MCF 10A (cell line): ENCODE measurements at regions of chr2 and their contacts with region 1.

Region 1: GRCh38 chr2:20097879-20098714 is 46.7 kb upstream of the LAPTM4A start:
- DNase-seq: peak; percentile 85
- H3K4me3 Mint-ChIP-seq: no peak overlapping the region
- H3K27ac Mint-ChIP-seq: no peak overlapping the region
- H3K4me1 Mint-ChIP-seq: peaks cover 21% of the 10 kb centered on the region
- H3K27me3 Mint-ChIP-seq: no peaks in the 10 kb centered on the region
- CTCF ChIP-seq: peak; percentile 92

Region 2: DNA sequence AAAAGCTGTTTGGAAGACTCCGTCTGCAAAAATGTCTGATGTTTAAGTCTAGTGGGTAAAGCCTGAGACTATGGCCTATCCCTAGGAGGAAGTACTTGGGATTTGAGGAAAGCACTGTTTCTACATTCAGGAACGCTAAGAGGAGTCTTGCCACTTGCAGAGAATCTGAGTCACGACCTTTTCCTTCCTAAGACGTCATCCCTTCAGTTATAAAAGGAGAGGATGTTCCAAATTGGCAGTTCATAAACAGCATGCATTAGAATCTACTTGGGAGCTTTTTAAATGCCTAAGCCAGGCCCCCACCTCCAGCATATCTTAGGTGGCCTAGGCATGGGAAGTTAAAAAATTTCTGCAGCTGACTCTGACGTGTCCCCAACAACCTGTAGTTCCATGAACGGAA is 322.3 kb before region 1 on chr2:
- CTCF ChIA-PET with region 1: no interaction called
- POLR2A ChIA-PET with region 1: no interaction called
- intact Hi-C with region 1: no loop called
- DNase-seq: no peak
- H3K4me3 Mint-ChIP-seq: no peak overlapping the region
- H3K27ac Mint-ChIP-seq: no peak overlapping the region
- H3K4me1 Mint-ChIP-seq: peaks cover 9% of the 10 kb centered on the region
- H3K27me3 Mint-ChIP-seq: peaks cover 17% of the 10 kb centered on the region
- CTCF ChIP-seq: no peak

Region 3: DNA sequence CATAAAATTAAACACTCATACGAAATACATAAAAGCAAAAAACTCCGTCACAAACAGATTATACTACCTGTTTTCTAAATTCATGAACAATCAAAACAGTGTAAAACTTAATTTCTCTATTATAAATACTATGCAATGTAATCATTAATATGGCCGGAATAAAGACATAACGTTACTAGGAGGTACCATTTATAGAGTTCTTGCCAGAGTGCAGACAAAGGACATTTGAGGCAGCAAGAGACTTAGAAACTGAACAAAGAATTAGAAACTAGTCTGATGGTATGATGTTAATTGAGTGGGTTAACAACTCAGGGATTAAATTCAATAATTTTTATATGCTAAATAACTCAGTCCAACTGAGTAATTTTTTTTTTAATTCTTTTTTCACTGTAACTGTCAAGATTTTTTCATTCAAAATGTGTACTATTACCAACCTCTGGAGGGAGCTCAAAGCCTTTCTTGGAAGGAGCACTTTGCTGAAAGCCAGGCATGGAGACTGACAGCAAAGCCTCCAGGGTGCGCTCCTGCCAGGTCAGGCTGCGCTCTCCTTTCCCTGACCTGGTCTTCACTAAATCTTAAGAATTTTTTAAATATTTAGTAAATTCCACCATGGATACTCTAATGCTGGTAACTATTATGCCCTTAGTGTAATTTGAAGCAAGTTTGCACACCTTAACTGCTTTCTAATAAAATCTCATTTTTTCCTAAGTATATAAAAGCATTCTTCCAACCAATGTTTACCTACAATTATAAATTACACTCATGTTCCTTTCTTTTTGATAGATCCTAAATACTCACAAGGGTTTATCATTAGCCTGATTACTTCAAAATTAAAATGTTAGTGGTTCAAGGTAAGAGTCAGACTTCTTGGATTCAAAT is 142.3 kb before region 1 on chr2:
- CTCF ChIA-PET with region 1: interaction called, 44 read pairs
- POLR2A ChIA-PET with region 1: interaction called, 4 read pairs
- intact Hi-C with region 1: loop called (anchors 1 kb)
- DNase-seq: peak; percentile 72
- H3K4me3 Mint-ChIP-seq: no peak overlapping the region
- H3K27ac Mint-ChIP-seq: no peak overlapping the region
- H3K4me1 Mint-ChIP-seq: no peaks in the 10 kb centered on the region
- H3K27me3 Mint-ChIP-seq: no peaks in the 10 kb centered on the region
- CTCF ChIP-seq: peak; percentile 82

Region 4: DNA sequence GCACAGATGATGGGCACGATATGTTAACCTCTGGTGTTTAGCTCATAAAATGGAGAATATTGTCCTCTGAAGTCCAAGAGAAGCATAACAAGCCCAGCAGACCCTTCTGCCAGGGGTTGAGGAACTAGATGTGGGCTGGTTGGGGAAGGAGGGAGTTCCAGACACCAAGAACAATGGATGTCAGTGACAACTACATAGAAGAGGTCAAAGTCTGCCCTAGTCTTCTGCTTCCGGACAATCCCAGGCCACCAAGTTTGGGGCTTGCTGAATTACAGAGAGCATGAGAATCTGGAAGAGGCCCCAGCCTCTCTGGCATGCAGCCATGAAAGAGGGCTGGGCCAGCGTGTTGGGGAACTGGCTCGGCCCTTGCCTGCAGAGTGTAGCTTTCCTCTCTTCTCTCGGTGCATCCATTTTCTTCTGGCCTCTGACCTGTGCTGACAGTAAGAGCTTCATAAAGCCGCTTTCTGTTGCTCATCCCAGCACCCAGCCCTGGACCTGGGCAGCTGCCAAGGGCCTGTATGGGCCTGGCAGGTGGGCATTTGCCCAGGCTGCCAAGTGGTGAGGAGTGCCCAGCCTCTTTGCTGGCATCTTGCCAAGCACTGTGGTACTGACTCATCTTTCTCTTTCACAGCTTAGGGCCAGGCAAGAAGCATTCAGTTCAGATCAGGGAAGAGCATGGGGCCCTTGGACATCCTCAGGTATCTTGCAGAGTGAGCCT is 32.1 kb before region 1 on chr2:
- CTCF ChIA-PET with region 1: interaction called, 11 read pairs
- POLR2A ChIA-PET with region 1: interaction called, 9 read pairs
- intact Hi-C with region 1: loop called (anchors 2 kb)
- DNase-seq: peak; percentile 99
- H3K4me3 Mint-ChIP-seq: peak overlapping the region; percentile 11
- H3K27ac Mint-ChIP-seq: peak overlapping the region; percentile 74
- H3K4me1 Mint-ChIP-seq: peaks cover 25% of the 10 kb centered on the region
- H3K27me3 Mint-ChIP-seq: no peaks in the 10 kb centered on the region
- CTCF ChIP-seq: no peak

Region 5: GRCh38 chr2:20071397-20072383 is 26.4 kb before region 1 on chr2:
- CTCF ChIA-PET with region 1: interaction called, 11 read pairs
- POLR2A ChIA-PET with region 1: interaction called, 9 read pairs
- intact Hi-C with region 1: loop called (anchors 2 kb)
- DNase-seq: peak; percentile 87
- H3K4me3 Mint-ChIP-seq: peak overlapping the region; percentile 59
- H3K27ac Mint-ChIP-seq: peak overlapping the region; percentile 87
- H3K4me1 Mint-ChIP-seq: peaks cover 44% of the 10 kb centered on the region
- H3K27me3 Mint-ChIP-seq: no peaks in the 10 kb centered on the region
- CTCF ChIP-seq: no peak

Region 6: GRCh38 chr2:20080839-20081415 is 17.2 kb before region 1 on chr2:
- CTCF ChIA-PET with region 1: interaction called, 13 read pairs
- POLR2A ChIA-PET with region 1: no interaction called
- intact Hi-C with region 1: no loop called
- DNase-seq: no peak
- H3K4me3 Mint-ChIP-seq: no peak overlapping the region
- H3K27ac Mint-ChIP-seq: no peak overlapping the region
- H3K4me1 Mint-ChIP-seq: no peaks in the 10 kb centered on the region
- H3K27me3 Mint-ChIP-seq: no peaks in the 10 kb centered on the region
- CTCF ChIP-seq: no peak